ENCODE measurements at regions of chr9 and their contacts with region 1.

Region 1: DNA sequence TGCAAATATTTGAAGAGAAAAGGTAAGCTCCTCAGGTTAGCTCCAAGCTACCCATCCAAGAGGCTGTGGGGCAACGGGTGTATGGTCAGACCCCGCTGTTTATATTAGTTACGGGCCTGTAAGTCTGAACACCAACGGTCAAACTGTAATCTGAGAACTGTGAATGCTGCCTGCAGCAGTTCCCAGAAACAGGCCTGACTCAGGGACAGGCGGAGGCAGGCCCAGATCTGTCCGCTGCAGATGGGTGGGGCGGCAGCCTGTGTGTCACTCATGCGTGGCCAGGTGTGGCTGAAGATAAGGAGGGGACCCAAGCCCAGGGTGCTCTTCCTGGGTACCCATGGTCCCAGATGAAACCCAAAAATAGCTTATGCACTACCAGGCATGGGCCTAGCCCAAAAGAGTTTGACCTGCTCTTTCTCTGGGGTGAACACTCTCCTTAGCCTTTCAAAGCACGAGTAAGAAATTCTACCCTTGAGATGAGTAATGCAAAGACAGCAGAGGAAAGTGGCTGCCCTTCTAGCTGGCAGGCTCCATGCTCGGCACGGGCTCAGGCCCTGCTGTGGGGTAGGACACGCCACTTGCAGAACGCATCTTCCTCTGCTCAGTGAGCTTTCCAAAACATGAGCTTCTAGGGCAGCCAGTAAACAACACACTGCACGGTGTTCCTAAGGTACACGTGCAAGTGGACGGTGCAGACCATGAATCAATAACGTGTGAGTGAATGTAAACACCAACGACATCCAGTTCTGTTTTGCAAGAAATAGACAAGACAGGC is 9.1 kb downstream of the UBAC1 start:
- DNase-seq: peak; percentile 9
- ATAC-seq: no peak

Region 2: DNA sequence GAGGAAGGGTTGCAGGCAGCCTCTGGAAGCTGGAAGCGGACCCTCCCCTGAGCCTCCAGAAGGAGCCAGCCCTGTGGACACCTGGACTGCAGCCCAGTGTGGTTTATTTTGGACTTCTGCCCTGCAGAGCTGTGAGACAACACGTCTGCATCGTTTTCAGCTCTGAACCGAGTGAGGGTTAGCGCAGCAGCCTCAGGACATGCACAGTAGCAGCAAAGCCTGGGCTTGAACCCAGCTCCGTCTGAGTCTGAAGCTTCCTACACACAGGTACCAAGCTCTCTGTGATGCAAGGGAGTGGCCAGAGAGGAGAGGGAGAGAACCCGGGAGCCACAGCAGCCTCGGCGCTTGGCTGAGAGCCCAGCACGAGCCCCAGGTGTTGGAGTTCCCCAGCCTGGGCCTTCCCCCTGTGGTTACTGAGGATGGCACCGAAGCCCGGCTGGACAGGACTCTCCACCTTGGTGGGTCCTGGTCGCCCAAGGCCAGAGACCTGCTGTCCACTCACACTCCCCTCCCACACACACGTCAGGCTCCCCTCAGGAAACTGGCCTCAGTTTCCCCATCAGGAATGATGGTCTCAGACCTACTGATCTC is 736.4 kb before region 1 on chr9:
- intact Hi-C with region 1: loop called (anchors 10 kb)
- DNase-seq: peak; percentile 58
- ATAC-seq: peak; percentile 34

Region 3: DNA sequence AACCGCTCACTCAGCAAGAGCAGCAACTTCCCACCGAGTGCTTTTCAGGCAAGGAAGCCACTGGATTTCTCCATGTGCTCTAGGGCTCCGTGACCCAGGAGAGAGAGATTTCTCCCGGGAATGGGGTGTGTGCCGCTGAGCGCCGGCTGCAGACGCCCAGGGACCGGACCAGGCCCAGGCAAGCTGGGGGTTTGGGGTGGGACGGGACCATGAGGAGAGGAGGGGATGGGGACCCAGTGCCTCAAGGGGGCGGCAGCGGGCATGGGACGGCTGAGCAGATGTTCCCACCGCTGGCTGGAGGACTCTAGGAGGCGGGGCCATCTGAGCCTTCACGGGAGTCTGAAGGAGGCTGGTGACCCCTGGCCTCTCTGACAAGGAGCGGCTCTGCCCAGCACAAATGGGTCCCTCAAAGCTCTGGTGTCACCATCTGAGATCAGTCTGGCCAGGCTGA is 280.5 kb before region 1 on chr9:
- intact Hi-C with region 1: no loop called
- DNase-seq: no peak
- ATAC-seq: no peak

Region 4: DNA sequence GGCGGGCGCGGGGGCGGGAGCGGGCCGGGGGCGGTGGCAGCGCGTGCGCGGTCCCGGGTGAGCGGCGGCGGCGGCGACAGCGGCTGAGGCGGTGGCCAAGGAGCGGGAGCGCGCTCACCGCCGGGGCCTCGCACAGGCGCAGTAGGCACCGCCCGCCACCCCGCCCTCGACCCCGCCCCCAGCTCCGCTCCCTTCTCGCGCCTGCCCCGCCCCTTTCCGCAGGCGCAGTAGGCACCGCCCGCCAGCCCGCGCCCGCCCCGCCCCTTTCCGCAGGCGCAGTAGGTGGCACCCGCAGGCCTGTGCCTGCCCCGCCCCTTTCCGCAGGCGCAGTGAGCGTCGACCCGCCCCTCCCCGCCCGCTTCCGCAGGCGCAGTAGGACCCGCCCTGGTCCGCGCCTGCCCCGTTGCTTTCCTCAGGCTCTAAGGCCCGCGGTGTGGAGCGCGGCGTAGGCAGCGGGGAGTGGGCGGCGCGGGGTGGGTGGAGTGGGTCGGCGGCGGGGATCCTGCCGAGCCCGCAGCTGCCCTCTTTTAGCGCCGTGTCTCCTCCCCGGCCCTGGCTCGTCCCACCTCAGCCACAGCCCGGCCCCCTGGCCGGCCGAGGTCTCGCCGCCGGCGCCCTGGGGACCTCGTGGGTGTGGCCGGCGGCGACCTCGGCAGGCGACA is 44.5 kb before region 1 on chr9 and contains the start of gene CAMSAP1:
- intact Hi-C with region 1: loop called (anchors 5 kb)
- DNase-seq: peak; percentile 96
- ATAC-seq: peak; percentile 98
- total RNA-seq, gene CAMSAP1: 17.6 TPM

Region 5: DNA sequence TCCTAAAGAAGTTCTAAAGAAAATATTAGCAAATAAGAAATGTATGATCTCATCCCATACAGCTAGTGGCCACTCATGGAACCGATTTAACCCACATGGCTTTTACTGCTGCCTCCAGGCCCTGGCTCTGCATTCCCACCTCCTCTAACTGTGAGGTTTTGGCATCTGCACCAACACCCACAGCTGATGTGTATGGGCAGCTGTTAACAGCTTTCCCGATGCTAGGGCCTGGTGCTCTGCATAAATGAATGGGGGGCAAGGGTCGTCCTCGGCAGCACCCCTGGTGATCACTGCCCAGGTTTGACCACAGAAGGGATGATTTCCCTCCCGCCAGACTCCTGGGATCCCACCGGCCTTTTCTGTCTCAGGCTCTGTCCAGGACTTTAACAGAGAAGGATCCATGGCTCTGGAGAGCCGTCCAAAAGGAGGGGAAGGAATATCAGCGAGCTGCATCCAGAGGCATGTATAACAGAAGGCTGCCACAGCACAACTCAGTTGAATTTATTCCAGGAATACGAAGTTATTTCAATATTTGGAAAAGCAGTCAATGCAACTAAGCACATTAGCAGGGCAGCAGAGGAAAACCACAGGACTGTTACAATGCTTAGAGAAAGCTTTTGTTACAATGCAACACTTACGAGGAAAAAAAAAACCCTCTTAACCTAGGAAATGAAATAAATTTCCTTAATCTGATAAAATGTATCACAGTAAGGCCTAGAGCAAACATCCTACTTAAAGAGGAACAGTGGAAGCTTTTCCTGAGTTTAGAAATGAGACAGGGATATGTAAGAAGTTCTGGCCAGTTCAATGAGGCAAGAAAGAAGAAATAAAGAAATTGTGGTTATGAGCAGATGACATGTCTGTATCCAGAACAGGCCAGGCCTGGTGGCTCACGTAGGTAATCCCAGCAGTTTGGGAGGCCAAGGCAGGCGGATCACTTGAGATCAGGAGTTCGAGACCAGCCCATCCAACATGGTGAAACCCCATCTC is 80.0 kb after region 1 on chr9:
- intact Hi-C with region 1: no loop called
- DNase-seq: peak; percentile 25
- ATAC-seq: no peak

Measured in Right ventricle myocardium inferior (tissue), 1 donor.